MCF 10A (cell line): ENCODE measurements at regions of chr4 and their contacts with region 1.

Region 1: GRCh38 chr4:77358315-77358928 is 201.4 kb downstream of the CCNG2 start:
- DNase-seq: peak; percentile 59
- H3K4me3 Mint-ChIP-seq: no peak overlapping the region
- H3K27ac Mint-ChIP-seq: no peak overlapping the region
- H3K4me1 Mint-ChIP-seq: peaks cover 6% of the 10 kb centered on the region
- H3K27me3 Mint-ChIP-seq: no peaks in the 10 kb centered on the region
- CTCF ChIP-seq: peak; percentile 64

Region 2: GRCh38 chr4:77232653-77233052 is 125.8 kb before region 1 on chr4:
- CTCF ChIA-PET with region 1: interaction called, 420 read pairs
- POLR2A ChIA-PET with region 1: no interaction called
- intact Hi-C with region 1: no loop called
- DNase-seq: peak; percentile 51
- H3K4me3 Mint-ChIP-seq: no peak overlapping the region
- H3K27ac Mint-ChIP-seq: no peak overlapping the region
- H3K4me1 Mint-ChIP-seq: peaks cover 15% of the 10 kb centered on the region
- H3K27me3 Mint-ChIP-seq: peaks cover 28% of the 10 kb centered on the region
- CTCF ChIP-seq: no peak

Region 3: GRCh38 chr4:77269161-77269904 is 89.1 kb before region 1 on chr4:
- CTCF ChIA-PET with region 1: interaction called, 19 read pairs
- POLR2A ChIA-PET with region 1: no interaction called
- intact Hi-C with region 1: no loop called
- DNase-seq: no peak
- H3K4me3 Mint-ChIP-seq: no peak overlapping the region
- H3K27ac Mint-ChIP-seq: no peak overlapping the region
- H3K4me1 Mint-ChIP-seq: no peaks in the 10 kb centered on the region
- H3K27me3 Mint-ChIP-seq: no peaks in the 10 kb centered on the region
- CTCF ChIP-seq: no peak

Region 4: GRCh38 chr4:77308843-77309242 is 49.6 kb before region 1 on chr4:
- CTCF ChIA-PET with region 1: interaction called, 138 read pairs
- POLR2A ChIA-PET with region 1: interaction called, 5 read pairs
- intact Hi-C with region 1: loop called (anchors 1 kb)
- DNase-seq: peak; percentile 62
- H3K4me3 Mint-ChIP-seq: no peak overlapping the region
- H3K27ac Mint-ChIP-seq: no peak overlapping the region
- H3K4me1 Mint-ChIP-seq: peaks cover 7% of the 10 kb centered on the region
- H3K27me3 Mint-ChIP-seq: no peaks in the 10 kb centered on the region
- CTCF ChIP-seq: peak; percentile 52

Region 5: DNA sequence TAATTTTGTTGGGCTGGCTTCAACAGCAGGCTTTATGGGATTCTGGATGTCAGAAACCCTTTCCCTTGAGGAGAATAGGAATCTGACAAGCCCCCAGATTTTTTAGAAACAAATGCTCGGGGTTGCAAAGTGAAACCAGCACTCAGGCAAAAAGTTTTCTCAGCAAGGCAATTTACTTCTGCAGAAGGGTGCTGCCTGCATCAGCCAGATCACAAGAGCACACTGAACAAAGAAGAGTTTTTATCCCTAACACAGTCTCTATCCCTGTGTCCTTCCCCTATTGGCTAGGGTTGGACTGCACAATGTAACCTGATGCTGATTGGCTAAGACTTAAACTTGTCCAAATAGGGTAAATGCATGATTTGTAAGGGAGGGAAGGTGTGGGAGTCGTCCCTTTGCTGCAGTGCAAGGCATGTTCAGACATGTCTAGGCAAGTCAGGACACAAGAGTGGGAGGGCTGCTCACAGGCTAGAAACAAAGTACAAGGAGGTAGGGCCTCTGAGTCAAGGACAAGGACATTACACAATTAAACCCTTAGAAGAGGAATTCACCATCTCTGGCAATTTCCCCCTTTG is 25.6 kb before region 1 on chr4:
- CTCF ChIA-PET with region 1: interaction called, 10 read pairs
- POLR2A ChIA-PET with region 1: no interaction called
- intact Hi-C with region 1: no loop called
- DNase-seq: peak; percentile 18
- H3K4me3 Mint-ChIP-seq: no peak overlapping the region
- H3K27ac Mint-ChIP-seq: no peak overlapping the region
- H3K4me1 Mint-ChIP-seq: no peaks in the 10 kb centered on the region
- H3K27me3 Mint-ChIP-seq: no peaks in the 10 kb centered on the region
- CTCF ChIP-seq: no peak

Region 6: GRCh38 chr4:77347341-77347966 is 11.0 kb before region 1 on chr4:
- CTCF ChIA-PET with region 1: interaction called, 30 read pairs
- POLR2A ChIA-PET with region 1: interaction called, 5 read pairs
- intact Hi-C with region 1: no loop called
- DNase-seq: no peak
- H3K4me3 Mint-ChIP-seq: no peak overlapping the region
- H3K27ac Mint-ChIP-seq: no peak overlapping the region
- H3K4me1 Mint-ChIP-seq: peaks cover 15% of the 10 kb centered on the region
- H3K27me3 Mint-ChIP-seq: no peaks in the 10 kb centered on the region
- CTCF ChIP-seq: no peak

Region 7: DNA sequence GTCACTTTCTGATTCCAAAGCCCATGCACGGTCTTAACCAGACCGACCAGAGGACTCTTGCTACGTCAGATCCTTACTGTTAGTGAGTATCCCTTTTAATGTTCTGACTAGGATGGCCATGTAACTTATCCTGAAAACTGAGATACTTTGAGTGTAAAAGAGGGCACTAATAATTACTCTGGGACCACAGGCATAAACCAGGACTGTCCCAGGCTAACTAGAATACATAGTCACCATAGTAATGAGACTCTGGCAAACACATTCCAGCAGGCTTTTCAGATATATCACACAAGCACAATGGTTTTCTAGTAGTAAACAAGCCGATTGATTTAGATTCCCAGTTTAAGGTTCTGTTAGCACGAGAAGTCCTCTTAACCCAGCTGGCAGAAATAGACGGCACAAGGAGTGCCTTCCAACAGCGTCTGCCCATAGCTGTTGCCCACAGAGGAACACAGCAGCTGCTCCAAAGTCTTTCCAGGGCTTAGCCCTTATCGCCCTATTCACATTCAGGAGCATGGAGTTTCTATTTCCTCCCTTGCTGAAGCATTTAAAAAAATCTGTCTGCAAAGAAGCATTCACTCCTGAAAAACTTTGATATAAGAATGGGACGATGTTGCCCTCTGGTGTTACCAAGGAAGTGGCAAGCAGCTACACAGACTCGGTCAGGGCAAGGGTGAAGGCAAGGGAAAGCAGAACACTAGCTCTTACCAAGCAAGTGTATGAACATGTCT is 339.6 kb after region 1 on chr4:
- CTCF ChIA-PET with region 1: interaction called, 15 read pairs
- POLR2A ChIA-PET with region 1: no interaction called
- intact Hi-C with region 1: no loop called
- DNase-seq: peak; percentile 73
- H3K4me3 Mint-ChIP-seq: no peak overlapping the region
- H3K27ac Mint-ChIP-seq: no peak overlapping the region
- H3K4me1 Mint-ChIP-seq: peaks cover 23% of the 10 kb centered on the region
- H3K27me3 Mint-ChIP-seq: no peaks in the 10 kb centered on the region
- CTCF ChIP-seq: peak; percentile 65